Calu3 (cell line): ENCODE measurements at regions of chr6 and their contacts with region 1.

Region 1: DNA sequence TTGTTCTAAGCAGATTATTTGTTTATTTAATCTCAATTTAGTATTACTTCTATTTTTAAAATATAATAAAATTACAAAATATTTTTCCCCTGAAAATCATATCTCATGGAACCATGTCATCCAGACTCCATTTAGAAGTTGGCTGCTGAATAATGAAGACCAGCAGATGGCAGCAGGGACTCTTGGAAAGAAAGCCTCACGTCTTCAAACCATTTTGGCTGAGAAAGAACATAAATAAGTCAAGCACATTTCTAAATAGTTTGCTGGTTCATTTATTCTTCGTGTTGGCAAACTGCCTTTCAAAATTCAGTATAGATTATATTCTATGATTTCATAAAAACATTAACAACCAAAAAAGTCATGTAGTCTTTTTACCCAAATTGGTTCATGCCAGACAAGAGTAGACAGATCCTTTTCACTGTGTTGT is 71.7 kb downstream of the RCAN2 start:
- DNase-seq: peak; percentile 55
- H3K4me3 Mint-ChIP-seq: no peak overlapping the region
- H3K27ac Mint-ChIP-seq: no peak overlapping the region
- H3K4me1 Mint-ChIP-seq: peaks cover 9% of the 10 kb centered on the region
- H3K27me3 Mint-ChIP-seq: no peaks in the 10 kb centered on the region
- CTCF ChIP-seq: no peak

Region 2: GRCh38 chr6:46290421-46291274 is 128.9 kb before region 1 on chr6:
- CTCF ChIA-PET with region 1: interaction called, 10 read pairs
- intact Hi-C with region 1: no loop called
- DNase-seq: no peak
- H3K4me3 Mint-ChIP-seq: no peak overlapping the region
- H3K27ac Mint-ChIP-seq: no peak overlapping the region
- H3K4me1 Mint-ChIP-seq: no peaks in the 10 kb centered on the region
- H3K27me3 Mint-ChIP-seq: peaks cover 11% of the 10 kb centered on the region
- CTCF ChIP-seq: no peak

Region 3: GRCh38 chr6:46491628-46492547 is 72.3 kb after region 1 on chr6:
- CTCF ChIA-PET with region 1: interaction called, 4 read pairs
- intact Hi-C with region 1: loop called (anchors 1 kb)
- DNase-seq: peak; percentile 75
- H3K4me3 Mint-ChIP-seq: peak overlapping the region; percentile 73
- H3K27ac Mint-ChIP-seq: no peak overlapping the region
- H3K4me1 Mint-ChIP-seq: peaks cover 23% of the 10 kb centered on the region
- H3K27me3 Mint-ChIP-seq: peaks cover 33% of the 10 kb centered on the region
- CTCF ChIP-seq: peak; percentile 28

Region 4: GRCh38 chr6:46626228-46626909 is 206.8 kb after region 1 on chr6:
- CTCF ChIA-PET with region 1: interaction called, 4 read pairs
- intact Hi-C with region 1: loop called (anchors 1 kb)
- DNase-seq: peak; percentile 16
- H3K4me3 Mint-ChIP-seq: no peak overlapping the region
- H3K27ac Mint-ChIP-seq: no peak overlapping the region
- H3K4me1 Mint-ChIP-seq: no peaks in the 10 kb centered on the region
- H3K27me3 Mint-ChIP-seq: no peaks in the 10 kb centered on the region
- CTCF ChIP-seq: peak; percentile 36

Region 5: DNA sequence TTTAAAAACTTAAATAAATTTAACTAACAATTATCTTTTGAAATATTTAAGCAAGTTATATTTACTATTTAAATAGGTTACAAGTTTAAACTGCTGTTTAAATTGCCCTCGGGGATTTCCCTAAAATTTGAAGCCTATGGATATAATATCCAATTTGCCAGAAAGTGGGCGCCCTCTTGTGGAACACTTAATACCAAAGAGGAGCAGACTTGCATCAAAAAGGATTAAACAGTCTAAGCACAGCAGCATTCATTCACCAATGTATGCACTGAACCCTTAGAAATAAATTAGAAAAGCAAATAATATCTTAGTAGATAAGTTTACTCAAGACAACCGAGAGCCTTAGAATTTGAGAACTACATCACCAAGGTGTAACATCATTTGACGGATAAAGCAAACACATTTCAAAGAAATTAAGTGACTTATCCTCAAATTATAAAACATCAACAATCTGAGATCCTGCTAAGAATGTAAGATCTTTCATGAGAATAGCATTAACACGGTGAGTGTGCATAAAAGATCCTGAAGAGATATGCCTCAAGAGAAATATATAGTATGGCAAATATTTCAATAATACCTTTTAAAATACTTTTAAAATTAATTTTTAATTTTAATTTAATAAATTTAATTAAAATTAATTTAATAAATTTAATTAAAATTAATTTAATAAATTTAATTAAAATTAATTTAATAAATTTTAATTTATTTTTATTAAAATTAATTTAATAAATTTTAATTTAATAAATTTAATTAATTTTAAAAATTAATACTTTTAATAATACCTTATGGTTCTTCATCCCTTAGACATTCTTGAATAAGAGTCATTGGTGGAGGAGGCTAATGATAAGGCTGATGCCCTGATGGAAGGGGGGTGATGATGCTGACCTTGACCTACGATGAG is 362.1 kb after region 1 on chr6:
- CTCF ChIA-PET with region 1: no interaction called
- intact Hi-C with region 1: loop called (anchors 2 kb)
- DNase-seq: peak; percentile 60
- H3K4me3 Mint-ChIP-seq: no peak overlapping the region
- H3K27ac Mint-ChIP-seq: no peak overlapping the region
- H3K4me1 Mint-ChIP-seq: no peaks in the 10 kb centered on the region
- H3K27me3 Mint-ChIP-seq: no peaks in the 10 kb centered on the region
- CTCF ChIP-seq: peak; percentile 37

Region 6: GRCh38 chr6:46993846-46994245 is 574.3 kb after region 1 on chr6:
- CTCF ChIA-PET with region 1: interaction called, 3 read pairs
- intact Hi-C with region 1: loop called (anchors 2 kb)
- DNase-seq: peak; percentile 37
- H3K4me3 Mint-ChIP-seq: no peak overlapping the region
- H3K27ac Mint-ChIP-seq: peak overlapping the region; percentile 2
- H3K4me1 Mint-ChIP-seq: peaks cover 79% of the 10 kb centered on the region
- H3K27me3 Mint-ChIP-seq: no peaks in the 10 kb centered on the region
- CTCF ChIP-seq: no peak